IMR-90 (cell line): ENCODE measurements at regions of chr17 and their contacts with region 1.

Region 1: GRCh38 chr17:76147211-76148014 is 6.4 kb upstream of the FOXJ1 start:
- DNase-seq: peak; percentile 26
- ATAC-seq: peak; percentile 57
- H3K4me3 ChIP-seq: no peak overlapping the region
- H3K27ac ChIP-seq: no peak overlapping the region
- H3K4me1 ChIP-seq: no peaks in the 10 kb centered on the region; the same call in 1 of the 2 replicates
- H3K27me3 ChIP-seq: peaks cover 12% of the 10 kb centered on the region
- CTCF ChIP-seq: peak; percentile 55
- POLR2A ChIP-seq: no peak
- RAD21 ChIP-seq: peak; percentile 44

Region 2: DNA sequence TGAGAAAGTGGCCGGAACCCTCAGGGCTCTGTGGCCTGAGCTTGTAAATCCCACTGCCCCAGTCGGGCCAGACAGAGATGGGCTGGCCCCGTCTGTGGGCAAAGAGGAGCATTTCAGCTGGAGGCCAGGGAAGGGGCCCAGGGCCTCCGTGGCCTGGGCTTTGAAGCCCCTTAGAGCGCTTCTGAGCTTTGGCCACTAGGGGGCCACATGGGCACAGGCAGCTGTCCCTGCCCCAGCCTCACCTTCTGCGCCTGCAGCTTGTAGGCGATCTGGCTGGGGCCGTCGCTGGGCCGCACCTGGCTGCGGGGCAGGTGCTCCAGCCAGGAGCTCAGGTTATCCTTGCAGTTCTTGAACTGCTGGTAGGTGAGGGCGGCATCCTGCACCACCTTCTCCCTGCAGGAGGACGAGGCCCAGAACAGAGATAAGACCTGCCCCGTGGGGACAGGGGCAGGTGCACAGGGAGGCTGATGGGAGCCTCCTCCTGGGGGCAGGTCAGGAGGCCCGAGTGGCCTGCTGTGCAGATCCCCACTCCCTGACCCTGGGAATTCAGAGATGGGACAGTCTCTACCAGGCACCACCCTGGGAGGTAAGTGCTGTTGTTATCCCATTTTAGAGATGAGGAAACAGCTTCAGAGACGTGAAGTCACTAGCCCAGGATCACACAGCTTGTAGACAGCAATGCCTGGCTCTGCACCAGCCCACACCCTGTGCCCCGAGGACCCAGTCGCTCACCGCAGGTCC is 133.1 kb before region 1 on chr17:
- CTCF ChIA-PET with region 1: no interaction called
- POLR2A ChIA-PET with region 1: no interaction called
- dilution Hi-C with region 1: no loop called
- in situ Hi-C with region 1: no loop called
- intact Hi-C with region 1: loop called (anchors 1 kb)
- DNase-seq: peak; percentile 58
- ATAC-seq: peak; percentile 99
- H3K4me3 ChIP-seq: no peak overlapping the region
- H3K27ac ChIP-seq: no peak overlapping the region
- H3K4me1 ChIP-seq: peaks cover 7% of the 10 kb centered on the region
- H3K27me3 ChIP-seq: peaks cover 22% of the 10 kb centered on the region; the same call in 1 of the 2 replicates
- CTCF ChIP-seq: peak; percentile 82
- POLR2A ChIP-seq: no peak
- RAD21 ChIP-seq: peak; percentile 79